Left ventricle myocardium superior (tissue), 1 donor: ENCODE measurements at regions of chr13 and their contacts with region 1.

Region 1: DNA sequence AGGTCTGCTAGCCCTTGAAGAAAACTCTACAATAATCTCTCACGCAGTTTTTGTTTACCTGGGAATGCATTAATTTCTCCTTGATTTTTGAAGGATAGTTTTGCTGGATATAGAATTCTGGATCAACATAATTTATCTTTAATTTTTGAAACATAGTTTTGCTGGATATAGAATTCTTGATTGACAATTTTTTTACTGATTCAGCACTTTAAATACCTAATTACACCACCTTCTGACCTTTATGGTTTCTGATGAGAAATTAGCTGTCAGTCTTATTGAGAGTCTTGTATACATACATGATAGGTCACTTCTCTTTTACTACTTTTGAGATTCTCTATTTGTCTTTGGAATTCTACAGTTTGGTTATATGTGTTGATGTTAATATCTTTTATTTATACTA is 741.6 kb downstream of the FGF9 start:
- DNase-seq: no peak
- ATAC-seq: no peak

Region 2: DNA sequence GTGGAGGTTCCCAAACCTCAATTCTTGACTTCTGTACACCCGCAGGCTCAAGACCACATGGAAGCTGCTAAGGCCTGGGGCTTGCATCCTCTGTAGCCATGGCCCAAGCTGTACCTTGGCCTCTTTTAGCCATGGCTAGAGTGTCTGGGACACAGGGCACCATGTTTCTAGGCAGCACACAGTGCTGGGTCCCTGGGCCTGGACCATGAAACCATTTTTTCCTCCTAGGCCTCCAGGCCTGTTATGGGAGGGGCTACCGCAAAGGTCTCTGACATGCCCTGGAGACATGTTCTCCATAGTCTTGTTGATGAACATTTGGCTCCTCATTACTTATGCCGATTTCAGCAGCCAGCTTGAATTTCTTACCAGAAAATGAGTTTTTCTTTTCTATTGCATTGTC is 40.2 kb before region 1 on chr13:
- intact Hi-C with region 1: loop called (anchors 1 kb)
- DNase-seq: no peak
- ATAC-seq: no peak

Region 3: DNA sequence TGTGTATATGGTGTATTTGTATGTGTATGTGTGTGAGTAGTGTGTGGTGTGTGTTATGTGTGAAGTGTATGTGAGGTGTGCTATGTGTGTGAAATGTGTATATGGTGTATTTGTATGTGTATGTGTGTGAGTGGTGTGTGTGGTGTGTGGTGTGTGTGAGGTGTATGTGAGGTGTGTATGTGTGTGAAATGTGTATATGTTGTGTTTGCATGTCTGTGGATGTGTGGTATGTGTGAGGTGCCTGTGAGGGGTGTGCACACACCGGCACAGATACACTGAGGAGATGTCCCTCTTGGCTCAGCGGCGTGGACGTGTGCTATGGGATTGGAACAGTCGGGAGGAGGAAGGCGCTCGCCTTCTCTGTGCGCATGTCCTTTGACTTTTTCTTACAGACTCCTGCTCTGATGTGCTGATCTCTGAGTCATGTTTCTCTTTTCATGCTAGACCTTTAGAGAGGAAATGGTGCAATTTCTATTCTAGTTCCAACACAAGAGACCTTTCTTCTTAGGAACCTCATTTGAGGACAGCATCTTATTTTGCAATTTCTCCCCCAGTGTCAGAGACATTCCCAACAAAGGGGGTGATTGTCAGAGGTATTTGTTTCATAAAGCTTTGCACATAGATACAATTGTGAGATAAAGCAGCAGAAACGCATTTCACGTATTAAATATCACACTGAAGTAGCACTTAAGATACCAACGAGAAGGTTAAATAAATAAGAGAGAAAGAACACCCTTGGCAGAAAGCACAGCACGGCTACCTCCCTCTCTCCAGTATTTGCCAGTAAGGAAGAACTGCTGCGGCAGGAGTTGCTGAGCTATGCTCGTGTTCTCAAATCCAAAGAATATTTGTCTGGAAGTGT is 1146.5 kb after region 1 on chr13:
- intact Hi-C with region 1: no loop called
- DNase-seq: peak; percentile 75
- ATAC-seq: peak; percentile 90